ENCODE measurements at regions of chr1 and their contacts with region 1.

Region 1: DNA sequence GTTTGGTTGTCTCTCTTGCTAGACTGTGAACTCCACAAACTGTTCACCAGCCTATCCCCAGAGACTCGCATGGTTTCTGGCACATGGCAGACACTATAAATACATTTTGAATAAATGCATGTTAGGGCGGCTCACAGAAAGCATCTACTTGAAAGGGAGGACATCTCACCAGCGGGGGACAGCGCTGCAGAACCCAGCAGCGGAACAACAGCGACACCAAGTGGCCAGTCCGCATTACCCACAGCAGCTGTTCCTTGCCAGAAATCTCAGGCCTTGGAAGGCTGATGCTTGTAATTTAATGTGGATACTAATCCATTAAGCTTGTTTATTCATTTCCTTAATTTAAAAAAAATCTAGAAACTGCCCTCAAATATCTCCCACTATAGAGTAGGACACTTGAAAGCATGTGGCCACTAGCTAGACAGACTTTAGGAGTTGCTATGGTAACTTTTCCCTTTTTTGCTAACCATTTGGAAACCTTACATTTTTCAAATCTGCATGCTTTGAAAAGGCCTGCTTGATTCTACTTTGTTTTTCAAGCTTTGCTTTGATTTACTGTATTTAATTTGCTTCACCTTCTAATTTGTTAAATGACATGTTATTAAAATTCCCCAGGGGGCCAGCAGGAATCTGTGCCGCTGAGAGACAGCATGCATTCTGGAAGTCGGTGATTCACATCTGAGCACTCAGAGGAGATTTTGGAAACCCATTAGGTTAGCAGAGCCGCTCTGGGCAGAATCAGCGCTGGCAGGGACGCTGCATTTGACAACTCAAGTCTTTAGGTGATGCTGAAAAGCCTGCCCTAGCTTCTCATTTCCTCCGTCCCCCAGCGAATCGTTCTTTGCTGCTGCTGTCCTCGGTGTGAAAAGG is 63.5 kb upstream of the SSX2IP start:
- DNase-seq: no peak
- H3K4me3 ChIP-seq: no peak overlapping the region
- H3K27me3 ChIP-seq: no peaks in the 10 kb centered on the region
- CTCF ChIP-seq: peak; percentile 98

Region 2: DNA sequence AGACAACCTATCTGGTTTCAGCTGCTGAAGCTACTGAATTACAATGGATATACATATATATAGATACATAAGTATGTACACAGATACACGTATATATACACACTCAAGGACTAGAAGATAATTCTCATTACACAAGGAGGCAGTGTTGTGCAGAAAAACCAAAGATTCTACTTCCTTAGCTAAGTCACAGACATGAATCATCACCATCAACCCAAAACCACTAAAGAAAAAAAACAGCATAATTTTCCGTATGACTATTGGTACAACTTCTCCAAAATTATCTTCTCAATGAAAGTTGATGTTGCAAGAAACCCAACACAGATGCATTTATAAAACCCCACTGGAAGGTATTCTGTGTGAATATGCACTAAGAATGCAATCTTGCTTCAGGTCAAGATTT is 311.5 kb before region 1 on chr1:
- CTCF ChIA-PET with region 1: interaction called, 12 read pairs
- POLR2A ChIA-PET with region 1: no interaction called
- DNase-seq: peak; percentile 76
- H3K4me3 ChIP-seq: no peak overlapping the region
- H3K27me3 ChIP-seq: no peaks in the 10 kb centered on the region
- CTCF ChIP-seq: peak; percentile 52; the same call in 1 of the 2 replicates

Region 3: GRCh38 chr1:84620720-84621313 is 132.9 kb before region 1 on chr1:
- CTCF ChIA-PET with region 1: interaction called, 16 read pairs
- POLR2A ChIA-PET with region 1: no interaction called
- DNase-seq: no peak
- H3K4me3 ChIP-seq: peak overlapping the region; percentile 51
- H3K27me3 ChIP-seq: no peaks in the 10 kb centered on the region
- CTCF ChIP-seq: peak; percentile 70

Region 4: DNA sequence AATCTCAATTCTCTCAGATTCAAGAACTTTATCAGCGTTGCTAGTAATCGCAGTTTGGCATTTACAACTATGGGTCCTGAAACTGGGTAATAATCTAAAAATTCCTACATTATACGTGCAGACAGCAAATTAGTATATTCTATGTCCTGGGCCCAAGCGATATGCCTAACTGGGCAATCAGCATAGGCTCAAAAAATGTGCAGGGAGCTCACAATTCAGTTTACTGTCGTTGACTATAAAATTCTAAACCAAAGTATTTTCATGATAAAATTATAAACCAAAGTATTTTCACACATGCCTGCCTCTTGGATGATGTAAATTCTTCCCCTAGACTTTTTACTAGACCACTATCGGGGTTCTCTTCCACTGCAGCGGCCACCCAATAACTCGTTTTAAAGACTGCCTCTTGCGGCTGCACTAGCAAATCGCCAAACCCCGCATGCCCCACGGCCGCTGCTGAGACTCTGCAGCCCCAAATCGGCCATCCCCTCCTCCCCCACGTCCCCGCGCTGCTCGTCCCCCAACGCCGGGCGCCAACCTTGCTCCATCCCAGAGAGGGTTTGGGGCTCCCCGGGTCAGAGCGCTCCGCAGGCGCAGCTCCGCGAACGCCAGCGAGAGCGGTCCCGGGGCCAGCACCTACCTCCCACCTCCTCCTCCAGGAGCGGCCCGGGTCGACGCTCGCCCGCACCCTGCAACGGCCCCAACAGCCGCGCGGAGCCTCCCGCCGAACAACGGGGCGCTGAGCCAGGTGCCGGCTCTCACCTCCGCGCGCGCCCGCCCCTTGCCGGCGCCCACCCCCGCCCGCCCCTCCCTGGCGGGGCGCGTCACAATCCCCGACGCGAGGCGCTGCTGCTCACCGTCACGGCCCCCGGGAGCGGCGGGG is 64.0 kb before region 1 on chr1:
- CTCF ChIA-PET with region 1: interaction called, 11 read pairs
- POLR2A ChIA-PET with region 1: no interaction called
- DNase-seq: no peak
- H3K4me3 ChIP-seq: peak overlapping the region; percentile 73
- H3K27me3 ChIP-seq: no peaks in the 10 kb centered on the region
- CTCF ChIP-seq: peak; percentile 43

Region 5: GRCh38 chr1:84700070-84700469 is 53.7 kb before region 1 on chr1:
- CTCF ChIA-PET with region 1: no interaction called
- POLR2A ChIA-PET with region 1: no interaction called
- DNase-seq: no peak
- H3K4me3 ChIP-seq: no peak overlapping the region
- H3K27me3 ChIP-seq: no peaks in the 10 kb centered on the region
- CTCF ChIP-seq: no peak

Region 6: GRCh38 chr1:84735483-84735882 is 18.3 kb before region 1 on chr1:
- CTCF ChIA-PET with region 1: interaction called, 11 read pairs
- POLR2A ChIA-PET with region 1: no interaction called
- DNase-seq: no peak
- H3K4me3 ChIP-seq: no peak overlapping the region
- H3K27me3 ChIP-seq: no peaks in the 10 kb centered on the region
- CTCF ChIP-seq: no peak

Region 7: DNA sequence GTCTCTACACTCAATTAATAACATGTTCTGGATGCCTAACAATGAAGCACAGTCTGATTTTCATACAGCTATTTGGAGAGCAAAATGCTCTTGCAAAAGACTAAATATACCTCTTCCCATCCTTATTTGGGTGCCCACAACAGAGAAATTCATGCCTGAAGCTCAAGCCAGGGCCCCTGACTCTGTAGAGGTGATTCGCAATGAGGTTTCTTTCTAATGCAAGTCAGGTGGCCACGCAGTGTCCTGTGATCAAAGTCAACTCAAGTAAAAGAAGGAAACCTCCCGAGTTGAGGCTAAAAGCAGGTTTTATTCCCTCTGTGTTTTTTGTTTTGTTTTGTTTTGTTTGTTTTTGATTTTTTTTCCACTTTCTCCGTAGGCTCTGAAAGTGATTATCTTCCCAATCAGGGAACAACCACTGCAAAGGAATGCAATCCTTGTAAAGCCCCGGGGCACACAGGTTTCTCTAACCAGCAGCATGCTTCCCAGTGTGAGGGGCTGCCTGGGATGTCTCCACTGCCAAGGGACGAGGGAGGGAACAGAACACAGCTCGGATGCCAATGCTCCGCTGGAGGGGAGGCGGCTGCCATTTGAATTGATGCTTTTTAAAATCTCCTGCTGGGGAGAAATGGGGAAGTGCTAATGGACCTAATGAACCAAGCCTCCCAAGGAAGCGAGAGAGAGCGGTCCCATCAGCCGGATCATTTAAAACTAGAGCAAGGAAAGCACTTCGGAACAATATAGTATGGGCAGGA is 10.3 kb after region 1 on chr1:
- CTCF ChIA-PET with region 1: interaction called, 19 read pairs
- POLR2A ChIA-PET with region 1: no interaction called
- DNase-seq: no peak
- H3K4me3 ChIP-seq: no peak overlapping the region
- H3K27me3 ChIP-seq: peaks cover 15% of the 10 kb centered on the region
- CTCF ChIP-seq: no peak

Measured in BJ (cell line).